Naive thymus-derived CD4-positive, alpha-beta T cell (primary cell): ENCODE measurements at regions of chr3 and their contacts with region 1.

Region 1: DNA sequence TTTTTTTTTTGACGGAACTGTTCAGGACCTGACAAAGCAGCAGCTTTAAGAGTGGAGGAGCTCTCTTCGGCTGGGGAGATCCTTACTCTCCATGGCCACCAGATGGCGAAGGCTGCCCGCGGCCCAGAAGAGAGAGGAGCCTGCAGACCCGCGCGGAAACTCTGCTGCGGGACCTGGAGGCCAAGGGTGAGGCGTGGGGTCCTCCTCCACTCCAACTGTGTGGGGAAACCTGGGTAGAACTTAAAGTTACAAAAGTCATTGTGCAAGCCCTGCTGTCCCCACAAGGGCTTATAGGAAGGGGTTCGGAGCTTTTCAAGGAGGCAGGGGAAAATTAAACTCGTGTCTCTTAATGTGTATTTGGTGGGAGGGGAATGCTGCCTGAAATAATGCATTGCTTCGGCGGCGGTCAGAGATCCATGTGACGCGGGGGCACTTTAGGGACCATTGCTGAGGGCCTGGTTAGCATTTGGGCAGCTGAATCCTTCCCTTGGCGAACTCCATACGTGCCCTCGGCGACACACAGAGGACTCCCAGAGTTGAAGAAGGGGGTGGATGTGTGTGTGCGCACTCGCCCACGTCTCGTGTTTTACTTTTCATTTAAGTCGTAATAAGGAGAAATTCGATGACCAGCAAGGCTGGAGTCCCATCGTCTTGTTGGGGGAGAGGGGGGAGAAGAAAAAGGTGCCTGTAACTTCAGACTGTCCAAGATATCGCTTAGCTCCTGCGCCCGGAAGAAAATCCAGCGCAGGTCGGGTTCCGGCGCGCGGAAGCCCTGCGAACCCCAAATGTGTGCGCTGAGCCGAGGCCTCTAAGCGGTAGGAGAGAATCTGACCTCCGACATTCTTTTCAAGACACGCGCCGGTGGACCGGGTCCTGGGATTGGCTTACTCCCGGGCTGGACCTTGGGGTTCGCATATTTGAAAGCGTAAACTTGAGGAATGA is 9.7 kb downstream of the EOMES start:
- DNase-seq: peak; percentile 59 to 82 (median 75)
- ATAC-seq: peak; percentile 96
- H3K4me3 ChIP-seq: peak overlapping the region; percentile 77
- H3K4me3 Mint-ChIP-seq: peak overlapping the region; percentile 91 to 100 (median 96)
- H3K27ac ChIP-seq: no peak overlapping the region
- H3K27ac Mint-ChIP-seq: peak overlapping the region in 7 of 9 donors; percentile 16 to 81 (median 61)
- H3K4me1 ChIP-seq: peaks cover 4 to 20% of the 10 kb centered on the region in 2 donors
- H3K4me1 Mint-ChIP-seq: peaks cover 24 to 36% (median 30%) of the 10 kb centered on the region in 7 donors
- H3K27me3 ChIP-seq: peaks cover 0 to 20% of the 10 kb centered on the region in 2 donors
- H3K27me3 Mint-ChIP-seq: peaks cover 37 to 86% (median 41%) of the 10 kb centered on the region in 5 donors

Region 2: DNA sequence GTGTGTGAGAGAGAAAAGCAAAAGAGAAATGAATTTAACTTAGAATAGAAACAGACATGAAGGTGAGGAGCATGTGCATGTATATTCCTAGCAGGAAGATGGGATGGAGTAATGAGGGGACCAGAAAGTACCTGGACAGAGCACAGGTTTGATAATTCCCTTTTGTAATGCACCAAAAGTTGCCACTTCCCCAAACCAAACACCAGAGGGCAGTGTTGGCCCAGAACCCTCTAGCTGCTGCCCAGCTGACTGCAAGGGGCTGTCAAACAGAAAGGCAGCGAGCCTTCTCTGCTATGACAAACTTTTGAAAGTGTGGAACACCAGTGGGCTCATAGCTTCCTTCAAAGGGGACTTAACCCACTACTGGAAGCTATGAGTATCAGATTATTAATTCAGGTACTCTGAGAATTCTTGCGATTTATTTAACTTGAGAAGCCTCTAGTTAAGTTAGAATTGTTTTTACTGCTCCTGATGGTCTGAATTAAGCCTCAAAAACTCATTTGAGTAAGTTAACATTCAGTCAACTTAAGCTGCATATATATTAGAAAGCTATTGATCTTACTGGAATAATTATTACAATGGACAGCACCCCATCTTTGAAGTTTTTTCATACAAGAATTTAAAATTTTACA is 578.1 kb before region 1 on chr3:
- CTCF ChIA-PET with region 1: no interaction called
- POLR2A ChIA-PET with region 1: no interaction called
- intact Hi-C with region 1: loop called in 1 of 2 experiments (anchors 1 kb)
- DNase-seq: peak; percentile 9 to 56 (median 43)
- ATAC-seq: peak; percentile 83
- H3K4me3 ChIP-seq: no peak overlapping the region
- H3K4me3 Mint-ChIP-seq: no peak overlapping the region
- H3K27ac ChIP-seq: no peak overlapping the region
- H3K27ac Mint-ChIP-seq: no peak overlapping the region
- H3K4me1 ChIP-seq: no peaks in the 10 kb centered on the region
- H3K4me1 Mint-ChIP-seq: no peaks in the 10 kb centered on the region
- H3K27me3 ChIP-seq: peaks cover 0 to 3% of the 10 kb centered on the region in 2 donors
- H3K27me3 Mint-ChIP-seq: peaks cover 0 to 11% (median 0%) of the 10 kb centered on the region in 5 donors

Region 3: GRCh38 chr3:27669591-27669990 is 42.8 kb before region 1 on chr3:
- CTCF ChIA-PET with region 1: no interaction called
- POLR2A ChIA-PET with region 1: no interaction called
- intact Hi-C with region 1: no loop called
- DNase-seq: no peak
- ATAC-seq: peak; percentile 27
- H3K4me3 ChIP-seq: no peak overlapping the region
- H3K4me3 Mint-ChIP-seq: no peak overlapping the region
- H3K27ac ChIP-seq: no peak overlapping the region
- H3K27ac Mint-ChIP-seq: no peak overlapping the region
- H3K4me1 ChIP-seq: no peaks in the 10 kb centered on the region
- H3K4me1 Mint-ChIP-seq: peaks cover 4 to 31% (median 9%) of the 10 kb centered on the region in 7 donors
- H3K27me3 ChIP-seq: no peaks in the 10 kb centered on the region
- H3K27me3 Mint-ChIP-seq: peaks cover 0 to 4% (median 0%) of the 10 kb centered on the region in 5 donors

Region 4: DNA sequence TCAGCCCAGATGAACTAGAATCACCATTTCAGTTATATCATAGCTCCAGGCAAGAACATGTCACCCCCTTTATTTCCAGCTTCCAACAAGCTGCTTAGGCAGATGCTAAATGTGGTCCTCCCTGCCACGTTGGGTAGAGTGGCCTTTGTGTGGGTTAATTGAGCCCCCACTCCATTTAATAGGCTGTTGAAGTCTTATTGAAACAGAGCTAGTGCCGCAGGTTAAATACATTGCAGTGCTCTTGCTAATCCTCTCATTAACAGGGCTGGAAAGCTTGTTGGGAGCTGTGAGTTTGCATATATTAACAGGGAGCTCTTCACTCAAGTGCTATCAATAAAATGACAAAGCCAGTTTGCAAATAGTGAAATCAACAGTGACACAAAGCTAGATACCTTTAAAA is 280.6 kb after region 1 on chr3:
- CTCF ChIA-PET with region 1: no interaction called
- POLR2A ChIA-PET with region 1: no interaction called
- intact Hi-C with region 1: loop called in 1 of 2 experiments (anchors 2 kb)
- DNase-seq: no peak
- ATAC-seq: no peak
- H3K4me3 ChIP-seq: no peak overlapping the region
- H3K4me3 Mint-ChIP-seq: no peak overlapping the region
- H3K27ac ChIP-seq: no peak overlapping the region
- H3K27ac Mint-ChIP-seq: no peak overlapping the region
- H3K4me1 ChIP-seq: no peaks in the 10 kb centered on the region
- H3K4me1 Mint-ChIP-seq: peaks cover 0 to 5% (median 0%) of the 10 kb centered on the region in 7 donors
- H3K27me3 ChIP-seq: no peaks in the 10 kb centered on the region
- H3K27me3 Mint-ChIP-seq: no peaks in the 10 kb centered on the region

Region 5: GRCh38 chr3:28241221-28242160 is 529.1 kb after region 1 on chr3 and contains the start of gene CMC1:
- CTCF ChIA-PET with region 1: interaction called, 6 read pairs
- POLR2A ChIA-PET with region 1: no interaction called
- intact Hi-C with region 1: loop called (anchors 1 kb)
- DNase-seq: peak; percentile 69 to 93 (median 83)
- ATAC-seq: peak; percentile 95
- H3K4me3 ChIP-seq: peak within 1 kb of the TSS; percentile 71
- H3K4me3 Mint-ChIP-seq: peak within 1 kb of the TSS; percentile 88 to 97 (median 96)
- H3K27ac ChIP-seq: peak within 1 kb of the TSS; percentile 71
- H3K27ac Mint-ChIP-seq: peak within 1 kb of the TSS; percentile 85 to 96 (median 94)
- H3K4me1 ChIP-seq: peaks cover 16 to 40% of the 10 kb centered on the region in 2 donors
- H3K4me1 Mint-ChIP-seq: peaks cover 32 to 77% (median 60%) of the 10 kb centered on the region in 7 donors
- H3K27me3 ChIP-seq: no peaks in the 10 kb centered on the region
- H3K27me3 Mint-ChIP-seq: no peaks in the 10 kb centered on the region
- total RNA-seq, gene CMC1: 11.0 to 25.1 (median 13.9) TPM

Region 6: GRCh38 chr3:28317438-28318022 is 605.1 kb after region 1 on chr3:
- CTCF ChIA-PET with region 1: interaction called, 18 read pairs
- POLR2A ChIA-PET with region 1: no interaction called
- intact Hi-C with region 1: no loop called
- DNase-seq: peak in 7 of 9 donors; percentile 7 to 47 (median 34)
- ATAC-seq: peak; percentile 95
- H3K4me3 ChIP-seq: no peak overlapping the region
- H3K4me3 Mint-ChIP-seq: no peak overlapping the region
- H3K27ac ChIP-seq: no peak overlapping the region
- H3K27ac Mint-ChIP-seq: no peak overlapping the region
- H3K4me1 ChIP-seq: no peaks in the 10 kb centered on the region
- H3K4me1 Mint-ChIP-seq: peaks cover 0 to 19% (median 6%) of the 10 kb centered on the region in 7 donors
- H3K27me3 ChIP-seq: no peaks in the 10 kb centered on the region
- H3K27me3 Mint-ChIP-seq: no peaks in the 10 kb centered on the region

Region 7: GRCh38 chr3:28575746-28576613 is 863.6 kb after region 1 on chr3:
- CTCF ChIA-PET with region 1: no interaction called
- POLR2A ChIA-PET with region 1: no interaction called
- intact Hi-C with region 1: loop called in 1 of 2 experiments (anchors 10 kb)
- DNase-seq: no peak
- ATAC-seq: no peak
- H3K4me3 ChIP-seq: no peak overlapping the region
- H3K4me3 Mint-ChIP-seq: peak overlapping the region in 2 of 10 donors; percentile 4 to 28
- H3K27ac ChIP-seq: no peak overlapping the region
- H3K27ac Mint-ChIP-seq: no peak overlapping the region
- H3K4me1 ChIP-seq: no peaks in the 10 kb centered on the region
- H3K4me1 Mint-ChIP-seq: peaks cover 0 to 6% (median 3%) of the 10 kb centered on the region in 7 donors
- H3K27me3 ChIP-seq: peaks cover 2 to 8% of the 10 kb centered on the region in 2 donors
- H3K27me3 Mint-ChIP-seq: peaks cover 50 to 64% (median 59%) of the 10 kb centered on the region in 5 donors